Endothelial cell of umbilical vein (primary cell): ENCODE measurements at regions of chr18 and their contacts with region 1.

Region 1: GRCh38 chr18:39799006-39799405 is 2156.0 kb upstream of the PIK3C3 start:
- DNase-seq: peak; percentile 14
- H3K4me3 ChIP-seq: peak overlapping the region in 2 of 3 experiments; percentile 58 to 90
- H3K27ac ChIP-seq: no peak overlapping the region
- H3K4me1 ChIP-seq: peaks cover 6% of the 10 kb centered on the region
- H3K27me3 ChIP-seq: no peaks in the 10 kb centered on the region
- CTCF ChIP-seq: no peak
- POLR2A ChIP-seq: no peak

Region 2: GRCh38 chr18:39259736-39260135 is 539.3 kb before region 1 on chr18:
- CTCF ChIA-PET with region 1: no interaction called
- POLR2A ChIA-PET with region 1: no interaction called
- dilution Hi-C with region 1: no loop called
- intact Hi-C with region 1: no loop called
- DNase-seq: no peak
- H3K4me3 ChIP-seq: no peak overlapping the region
- H3K27ac ChIP-seq: no peak overlapping the region
- H3K4me1 ChIP-seq: no peaks in the 10 kb centered on the region
- H3K27me3 ChIP-seq: no peaks in the 10 kb centered on the region
- CTCF ChIP-seq: no peak
- POLR2A ChIP-seq: no peak

Region 3: DNA sequence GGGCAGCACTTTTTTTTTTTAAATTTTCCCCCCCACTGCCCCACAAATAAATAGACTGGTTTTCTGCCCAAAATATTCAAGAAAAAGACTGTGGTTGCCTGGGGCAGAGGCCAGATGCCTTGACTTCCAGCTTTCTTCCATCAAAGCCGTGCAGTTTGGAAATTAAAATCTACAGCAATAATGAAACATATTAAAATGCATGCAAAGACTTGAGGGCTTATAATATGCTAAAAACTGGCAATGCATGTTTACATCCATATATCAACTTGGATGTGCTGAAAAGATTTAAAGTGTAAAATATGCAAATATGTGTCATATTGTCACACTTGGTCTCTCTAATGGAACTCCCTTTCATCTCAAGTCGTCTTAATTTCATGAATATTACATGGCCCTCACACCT is 119.8 kb after region 1 on chr18:
- CTCF ChIA-PET with region 1: no interaction called
- POLR2A ChIA-PET with region 1: no interaction called
- dilution Hi-C with region 1: no loop called
- intact Hi-C with region 1: no loop called
- DNase-seq: no peak
- H3K4me3 ChIP-seq: no peak overlapping the region
- H3K27ac ChIP-seq: no peak overlapping the region
- H3K4me1 ChIP-seq: no peaks in the 10 kb centered on the region
- H3K27me3 ChIP-seq: no peaks in the 10 kb centered on the region
- CTCF ChIP-seq: no peak
- POLR2A ChIP-seq: no peak

Region 4: GRCh38 chr18:40159141-40160017 is 360.4 kb after region 1 on chr18:
- CTCF ChIA-PET with region 1: interaction called, 4 read pairs
- POLR2A ChIA-PET with region 1: no interaction called
- dilution Hi-C with region 1: no loop called
- intact Hi-C with region 1: loop called (anchors 5 kb)
- DNase-seq: peak; percentile 63
- H3K4me3 ChIP-seq: no peak overlapping the region
- H3K27ac ChIP-seq: no peak overlapping the region
- H3K4me1 ChIP-seq: peaks cover 6% of the 10 kb centered on the region
- H3K27me3 ChIP-seq: no peaks in the 10 kb centered on the region
- CTCF ChIP-seq: peak; percentile 44 to 63
- POLR2A ChIP-seq: no peak